Caco-2 (cell line): ENCODE measurements at regions of chr11 and their contacts with region 1.

Region 1: DNA sequence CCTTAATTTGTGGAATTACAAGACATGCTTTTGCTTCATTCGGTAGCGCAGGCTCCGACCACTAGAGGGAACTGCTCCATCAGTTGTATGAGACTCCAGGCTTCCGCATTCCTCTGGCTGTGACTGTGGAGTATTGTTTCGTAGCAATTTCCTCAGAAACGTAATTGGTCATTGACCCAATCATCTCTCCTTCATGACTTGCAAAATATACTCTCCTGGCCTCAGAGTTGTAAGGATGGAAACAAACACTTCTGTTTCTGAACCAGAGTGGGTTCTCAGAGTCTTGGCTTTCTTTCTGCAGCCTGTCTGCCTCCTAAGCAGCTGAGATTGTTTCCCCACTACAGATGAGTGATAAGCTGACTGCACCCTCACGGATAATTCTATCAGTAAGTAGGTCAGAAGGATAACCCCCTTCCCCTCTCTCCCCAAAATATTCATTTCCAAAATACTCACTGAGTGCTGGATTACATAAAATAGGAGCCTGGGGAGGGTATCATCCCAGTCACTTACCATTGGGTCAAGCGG is 146.8 kb upstream of the ZC3H12C start:
- DNase-seq: peak; percentile 90 to 92
- H3K4me3 ChIP-seq: peak overlapping the region; percentile 17
- H3K4me3 Mint-ChIP-seq: peak overlapping the region; percentile 72
- H3K27ac Mint-ChIP-seq: peak overlapping the region; percentile 91
- H3K4me1 ChIP-seq: 0 out of 2 replicates have a peak, but pooled peaks cover 5% of the 10 kb centered on the region
- H3K4me1 Mint-ChIP-seq: peaks cover 9% of the 10 kb centered on the region
- H3K27me3 ChIP-seq: no peaks in the 10 kb centered on the region; the same call in 1 of the 2 replicates
- H3K27me3 Mint-ChIP-seq: peaks cover 14% of the 10 kb centered on the region
- CTCF ChIP-seq: peak; percentile 98 to 99

Region 2: GRCh38 chr11:109994907-109995306 is 48.5 kb after region 1 on chr11:
- CTCF ChIA-PET with region 1: no interaction called
- POLR2A ChIA-PET with region 1: no interaction called
- intact Hi-C with region 1: loop called (anchors 1 kb)
- DNase-seq: peak in 1 of 2 experiments; percentile 22
- H3K4me3 ChIP-seq: no peak overlapping the region
- H3K4me3 Mint-ChIP-seq: no peak overlapping the region
- H3K27ac Mint-ChIP-seq: no peak overlapping the region
- H3K4me1 ChIP-seq: peaks cover 7% of the 10 kb centered on the region
- H3K4me1 Mint-ChIP-seq: no peaks in the 10 kb centered on the region
- H3K27me3 ChIP-seq: no peaks in the 10 kb centered on the region
- H3K27me3 Mint-ChIP-seq: no peaks in the 10 kb centered on the region
- CTCF ChIP-seq: peak in 1 of 2 experiments; percentile 6

Region 3: GRCh38 chr11:110059706-110060463 is 113.5 kb after region 1 on chr11:
- CTCF ChIA-PET with region 1: no interaction called
- POLR2A ChIA-PET with region 1: no interaction called
- intact Hi-C with region 1: no loop called
- DNase-seq: no peak
- H3K4me3 ChIP-seq: no peak overlapping the region
- H3K4me3 Mint-ChIP-seq: no peak overlapping the region
- H3K27ac Mint-ChIP-seq: no peak overlapping the region
- H3K4me1 ChIP-seq: no peaks in the 10 kb centered on the region
- H3K4me1 Mint-ChIP-seq: no peaks in the 10 kb centered on the region
- H3K27me3 ChIP-seq: no peaks in the 10 kb centered on the region
- H3K27me3 Mint-ChIP-seq: peaks cover 6% of the 10 kb centered on the region
- CTCF ChIP-seq: no peak

Region 4: GRCh38 chr11:110077831-110078325 is 131.5 kb after region 1 on chr11:
- CTCF ChIA-PET with region 1: no interaction called
- POLR2A ChIA-PET with region 1: no interaction called
- intact Hi-C with region 1: loop called (anchors 5 kb)
- DNase-seq: no peak
- H3K4me3 ChIP-seq: no peak overlapping the region
- H3K4me3 Mint-ChIP-seq: no peak overlapping the region
- H3K27ac Mint-ChIP-seq: no peak overlapping the region
- H3K4me1 ChIP-seq: peaks cover 33% of the 10 kb centered on the region
- H3K4me1 Mint-ChIP-seq: peaks cover 19% of the 10 kb centered on the region
- H3K27me3 ChIP-seq: no peaks in the 10 kb centered on the region
- H3K27me3 Mint-ChIP-seq: no peaks in the 10 kb centered on the region
- CTCF ChIP-seq: no peak

Region 5: DNA sequence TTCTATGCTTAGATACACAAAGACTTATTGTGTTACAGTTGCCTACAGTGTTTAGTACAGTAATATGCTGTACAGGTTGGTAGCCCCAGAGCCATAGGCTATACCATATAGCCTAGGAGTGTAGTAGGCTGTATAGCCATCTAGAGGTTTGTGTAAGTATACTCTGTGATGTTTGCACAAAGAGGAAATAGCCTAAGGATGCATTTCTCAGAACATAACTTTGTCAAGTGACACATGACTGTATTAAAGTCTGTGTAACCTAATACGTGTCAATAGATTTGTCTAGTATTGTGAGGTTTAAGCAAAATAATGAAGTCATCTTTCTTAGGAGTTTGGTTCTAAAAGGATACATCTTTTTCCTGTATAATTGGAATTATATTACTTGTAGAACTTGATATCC is 152.3 kb after region 1 on chr11:
- CTCF ChIA-PET with region 1: no interaction called
- POLR2A ChIA-PET with region 1: no interaction called
- intact Hi-C with region 1: loop called (anchors 1 kb)
- DNase-seq: no peak
- H3K4me3 ChIP-seq: no peak overlapping the region
- H3K4me3 Mint-ChIP-seq: no peak overlapping the region
- H3K27ac Mint-ChIP-seq: no peak overlapping the region
- H3K4me1 ChIP-seq: peaks cover 17% of the 10 kb centered on the region
- H3K4me1 Mint-ChIP-seq: peaks cover 6% of the 10 kb centered on the region
- H3K27me3 ChIP-seq: no peaks in the 10 kb centered on the region
- H3K27me3 Mint-ChIP-seq: no peaks in the 10 kb centered on the region
- CTCF ChIP-seq: no peak

Region 6: GRCh38 chr11:110195845-110196754 is 249.7 kb after region 1 on chr11:
- CTCF ChIA-PET with region 1: no interaction called
- POLR2A ChIA-PET with region 1: no interaction called
- intact Hi-C with region 1: loop called (anchors 1 kb)
- DNase-seq: peak; percentile 51 to 70
- H3K4me3 ChIP-seq: no peak overlapping the region
- H3K4me3 Mint-ChIP-seq: no peak overlapping the region
- H3K27ac Mint-ChIP-seq: peak overlapping the region; percentile 23
- H3K4me1 ChIP-seq: peaks cover 21% of the 10 kb centered on the region
- H3K4me1 Mint-ChIP-seq: peaks cover 29% of the 10 kb centered on the region
- H3K27me3 ChIP-seq: no peaks in the 10 kb centered on the region
- H3K27me3 Mint-ChIP-seq: no peaks in the 10 kb centered on the region
- CTCF ChIP-seq: no peak

Region 7: DNA sequence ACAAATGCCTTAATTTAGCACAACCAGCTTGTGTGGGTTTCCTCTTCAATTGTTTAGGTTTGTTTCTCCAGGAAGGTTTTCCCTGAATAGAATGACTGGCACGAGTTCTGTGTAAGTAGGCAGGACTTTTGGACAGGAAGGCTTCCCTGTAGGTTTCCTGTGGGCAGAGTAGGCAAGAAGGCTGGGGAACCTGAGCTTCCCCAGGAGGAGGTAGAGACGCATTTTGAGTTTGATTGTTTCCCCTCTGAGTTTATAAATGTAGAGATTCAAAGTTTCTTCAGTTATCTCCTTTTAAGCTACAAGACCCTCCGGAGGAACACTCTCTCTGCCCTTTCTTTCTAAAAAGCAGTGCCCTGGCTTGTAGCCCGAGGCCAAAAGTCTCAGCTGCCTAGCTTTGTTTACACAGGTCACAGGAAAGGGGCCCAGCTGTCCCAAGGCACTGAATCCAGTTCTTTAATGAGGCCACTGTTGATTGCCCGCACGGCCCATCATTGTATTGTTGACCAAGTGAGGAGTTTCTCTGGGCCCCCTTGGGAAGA is 416.7 kb after region 1 on chr11:
- CTCF ChIA-PET with region 1: no interaction called
- POLR2A ChIA-PET with region 1: no interaction called
- intact Hi-C with region 1: loop called (anchors 1 kb)
- DNase-seq: peak; percentile 78 to 87
- H3K4me3 ChIP-seq: no peak overlapping the region
- H3K4me3 Mint-ChIP-seq: peak overlapping the region; percentile 61
- H3K27ac Mint-ChIP-seq: peak overlapping the region; percentile 91
- H3K4me1 ChIP-seq: peaks cover 38% of the 10 kb centered on the region
- H3K4me1 Mint-ChIP-seq: peaks cover 58% of the 10 kb centered on the region
- H3K27me3 ChIP-seq: no peaks in the 10 kb centered on the region
- H3K27me3 Mint-ChIP-seq: no peaks in the 10 kb centered on the region
- CTCF ChIP-seq: no peak